Transverse colon (tissue), 4 donors: ENCODE measurements at regions of chr11 and their contacts with region 1.

Region 1: GRCh38 chr11:134150195-134150903 is 73.4 kb downstream of the NCAPD3 start:
- DNase-seq: peak; percentile 17
- H3K4me3 ChIP-seq: no peak overlapping the region
- H3K27ac ChIP-seq: peak overlapping the region in 1 of 4 donors; percentile 11
- H3K4me1 ChIP-seq: no peaks in the 10 kb centered on the region
- H3K27me3 ChIP-seq: no peaks in the 10 kb centered on the region
- CTCF ChIP-seq: no peak
- EP300 ChIP-seq: peak; percentile 13
- POLR2A ChIP-seq: no peak

Region 2: DNA sequence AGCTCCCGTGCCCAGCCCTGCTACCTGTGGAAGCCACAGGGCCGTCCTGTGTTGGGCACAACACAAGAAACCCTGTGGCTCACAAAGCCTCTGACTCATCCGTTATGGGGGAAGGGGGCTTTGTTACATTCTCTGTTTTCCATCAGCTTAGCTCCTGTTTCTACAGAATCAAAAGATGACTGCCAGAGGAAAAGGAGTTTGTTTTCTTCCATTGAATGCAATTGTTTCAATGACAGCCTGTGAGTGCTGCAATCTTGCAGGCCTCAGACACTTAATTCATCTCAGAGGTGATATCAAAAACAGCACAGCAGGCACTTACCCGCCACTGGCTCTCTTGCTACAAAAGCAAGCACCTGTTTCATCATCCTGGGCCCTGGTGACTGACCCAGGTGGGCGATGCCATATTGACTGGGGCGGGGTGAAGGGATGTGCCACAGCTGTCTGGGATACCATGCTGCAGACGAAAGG is 812.4 kb before region 1 on chr11:
- in situ Hi-C with region 1: no loop called
- intact Hi-C with region 1: no loop called
- DNase-seq: no peak
- H3K4me3 ChIP-seq: no peak overlapping the region
- H3K27ac ChIP-seq: no peak overlapping the region
- H3K4me1 ChIP-seq: no peaks in the 10 kb centered on the region
- H3K27me3 ChIP-seq: no peaks in the 10 kb centered on the region
- CTCF ChIP-seq: no peak
- EP300 ChIP-seq: no peak
- POLR2A ChIP-seq: no peak

Region 3: DNA sequence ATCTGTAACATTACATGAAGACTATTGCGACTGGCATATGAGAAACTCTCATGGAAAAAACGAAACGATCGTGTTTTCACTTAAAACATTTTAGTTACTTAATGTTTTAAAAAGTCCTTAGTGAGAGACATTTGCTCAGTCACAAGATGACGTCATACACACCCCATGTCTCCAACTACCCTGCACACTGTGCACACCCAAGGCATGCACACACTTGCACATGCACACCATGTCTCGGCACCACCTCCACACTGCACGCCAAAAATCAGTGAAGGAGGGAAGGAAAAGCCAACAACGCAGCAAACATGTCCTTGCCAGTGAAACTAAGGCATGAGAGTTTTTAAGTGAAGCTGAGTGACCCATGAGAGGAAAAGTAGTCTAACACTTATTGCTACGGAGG is 55.4 kb after region 1 on chr11:
- in situ Hi-C with region 1: no loop called
- intact Hi-C with region 1: loop called (anchors 2 kb)
- DNase-seq: no peak
- H3K4me3 ChIP-seq: no peak overlapping the region
- H3K27ac ChIP-seq: no peak overlapping the region
- H3K4me1 ChIP-seq: no peaks in the 10 kb centered on the region
- H3K27me3 ChIP-seq: no peaks in the 10 kb centered on the region
- CTCF ChIP-seq: no peak
- EP300 ChIP-seq: no peak
- POLR2A ChIP-seq: no peak